H1 (cell line): ENCODE measurements at regions of chr3 and their contacts with region 1.

Region 1: DNA sequence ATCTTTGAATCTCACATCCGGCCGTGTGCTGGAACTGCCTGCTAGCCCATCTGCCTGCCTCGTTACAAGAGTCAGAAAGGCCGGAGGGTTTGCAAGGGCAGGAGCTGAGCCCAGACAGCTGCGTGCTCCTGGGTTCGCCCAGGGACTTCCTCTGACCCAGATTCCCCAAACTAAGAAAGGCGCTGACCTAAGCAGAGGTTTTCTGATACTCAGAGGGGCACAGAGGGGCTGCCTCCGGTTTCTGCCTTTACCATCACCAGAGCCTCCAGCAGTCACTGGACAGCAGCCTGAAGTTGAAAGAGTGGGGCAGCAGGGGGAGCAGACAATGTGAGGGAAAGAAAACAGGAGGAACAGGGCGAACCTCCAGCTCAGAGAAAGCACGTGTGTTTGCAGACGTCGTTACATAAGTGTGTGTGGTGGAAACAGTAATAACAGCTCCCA is 33.4 kb upstream of the RAD18 start:
- DNase-seq: no peak
- H3K4me3 ChIP-seq: no peak overlapping the region
- H3K27ac ChIP-seq: no peak overlapping the region
- H3K4me1 ChIP-seq: peaks cover 0 to 5% (median 4%) of the 10 kb centered on the region in 4 experiments; a peak in 3 of 7 replicates
- H3K27me3 ChIP-seq: no peaks in the 10 kb centered on the region
- CTCF ChIP-seq: peak; percentile 44 to 57 (median 54)
- EP300 ChIP-seq: no peak
- POLR2A ChIP-seq: no peak
- RAD21 ChIP-seq: peak; percentile 35 to 61

Region 2: GRCh38 chr3:8911781-8912180 is 84.9 kb before region 1 on chr3:
- CTCF ChIA-PET with region 1: no interaction called
- POLR2A ChIA-PET with region 1: no interaction called
- DNase-seq: no peak
- H3K4me3 ChIP-seq: no peak overlapping the region
- H3K27ac ChIP-seq: no peak overlapping the region
- H3K4me1 ChIP-seq: no peaks in the 10 kb centered on the region
- H3K27me3 ChIP-seq: no peaks in the 10 kb centered on the region
- CTCF ChIP-seq: no peak
- EP300 ChIP-seq: no peak
- POLR2A ChIP-seq: no peak
- RAD21 ChIP-seq: no peak

Region 3: GRCh38 chr3:8954938-8955763 is 41.5 kb before region 1 on chr3:
- CTCF ChIA-PET with region 1: no interaction called
- POLR2A ChIA-PET with region 1: no interaction called
- DNase-seq: no peak
- H3K4me3 ChIP-seq: no peak overlapping the region
- H3K27ac ChIP-seq: no peak overlapping the region
- H3K4me1 ChIP-seq: no peaks in the 10 kb centered on the region
- H3K27me3 ChIP-seq: no peaks in the 10 kb centered on the region
- CTCF ChIP-seq: 0 out of 4 replicates have a peak, but pooled peaks of 1 of the 3 experiments have one; percentile 3
- EP300 ChIP-seq: no peak
- POLR2A ChIP-seq: no peak
- RAD21 ChIP-seq: no peak

Region 4: GRCh38 chr3:8982509-8982908 is 14.2 kb before region 1 on chr3:
- CTCF ChIA-PET with region 1: interaction called, 75 read pairs
- POLR2A ChIA-PET with region 1: no interaction called
- DNase-seq: no peak
- H3K4me3 ChIP-seq: no peak overlapping the region
- H3K27ac ChIP-seq: no peak overlapping the region
- H3K4me1 ChIP-seq: no peaks in the 10 kb centered on the region; a peak in 1 of 7 replicates
- H3K27me3 ChIP-seq: no peaks in the 10 kb centered on the region
- CTCF ChIP-seq: no peak
- EP300 ChIP-seq: no peak
- POLR2A ChIP-seq: no peak
- RAD21 ChIP-seq: no peak

Region 5: DNA sequence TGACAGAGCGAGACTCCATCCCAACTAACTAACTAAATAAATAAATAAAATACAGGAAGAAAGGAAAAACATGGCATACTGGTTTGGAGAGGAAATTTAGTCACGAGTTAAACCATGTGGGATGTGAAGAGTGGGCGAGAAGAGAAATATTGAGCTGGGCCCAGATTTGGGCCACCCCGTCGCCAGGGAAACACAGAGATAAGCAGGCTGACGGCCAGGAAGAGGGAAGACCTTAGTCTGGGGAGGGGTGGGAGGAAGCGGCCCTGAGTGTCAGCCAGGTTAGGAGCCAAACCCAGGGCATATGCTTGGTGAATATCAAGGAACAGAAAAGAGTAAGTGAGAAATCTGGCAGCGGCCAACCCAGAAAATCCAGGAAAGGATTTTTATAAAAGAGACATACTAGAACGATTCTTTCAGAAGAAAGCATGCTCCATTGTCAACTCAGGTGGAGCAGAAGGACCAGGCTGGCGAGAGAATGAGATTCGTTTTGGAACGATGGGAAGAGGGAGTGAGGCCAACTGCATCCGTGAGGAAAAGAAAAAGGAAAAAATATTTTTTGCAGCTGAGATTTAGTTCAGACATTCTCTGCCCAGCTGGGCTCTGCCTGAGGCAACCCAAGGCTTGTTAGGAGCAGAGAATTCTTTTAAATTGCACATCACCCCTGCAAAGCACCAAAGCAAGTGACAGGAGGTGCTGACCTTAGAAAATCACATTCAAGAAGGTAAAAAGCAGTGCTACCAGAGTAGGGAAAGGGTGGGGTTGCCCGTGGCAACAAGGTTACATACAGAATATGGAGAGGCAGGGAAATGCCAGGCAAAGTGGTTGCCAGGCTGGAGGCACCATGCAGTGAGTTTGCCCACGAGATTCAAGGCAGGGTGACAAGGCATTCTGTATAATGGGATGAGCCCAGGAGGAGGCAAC is 25.9 kb after region 1 on chr3:
- CTCF ChIA-PET with region 1: interaction called, 21 read pairs
- POLR2A ChIA-PET with region 1: interaction called, 3 read pairs
- DNase-seq: peak in 1 of 2 experiments; percentile 37
- H3K4me3 ChIP-seq: no peak overlapping the region
- H3K27ac ChIP-seq: no peak overlapping the region
- H3K4me1 ChIP-seq: peaks cover 0 to 9% (median 5%) of the 10 kb centered on the region in 4 experiments; a peak in 5 of 7 replicates
- H3K27me3 ChIP-seq: no peaks in the 10 kb centered on the region
- CTCF ChIP-seq: no peak
- EP300 ChIP-seq: no peak
- POLR2A ChIP-seq: no peak
- RAD21 ChIP-seq: no peak

Region 6: GRCh38 chr3:9056581-9056980 is 59.9 kb after region 1 on chr3:
- CTCF ChIA-PET with region 1: interaction called, 10 read pairs
- POLR2A ChIA-PET with region 1: no interaction called
- DNase-seq: no peak
- H3K4me3 ChIP-seq: no peak overlapping the region
- H3K27ac ChIP-seq: no peak overlapping the region
- H3K4me1 ChIP-seq: 0 out of 7 replicates have a peak, but pooled peaks cover 0 to 2% (median 0%) of the 10 kb centered on the region in 4 experiments
- H3K27me3 ChIP-seq: no peaks in the 10 kb centered on the region
- CTCF ChIP-seq: no peak
- EP300 ChIP-seq: no peak
- POLR2A ChIP-seq: no peak
- RAD21 ChIP-seq: no peak

Region 7: DNA sequence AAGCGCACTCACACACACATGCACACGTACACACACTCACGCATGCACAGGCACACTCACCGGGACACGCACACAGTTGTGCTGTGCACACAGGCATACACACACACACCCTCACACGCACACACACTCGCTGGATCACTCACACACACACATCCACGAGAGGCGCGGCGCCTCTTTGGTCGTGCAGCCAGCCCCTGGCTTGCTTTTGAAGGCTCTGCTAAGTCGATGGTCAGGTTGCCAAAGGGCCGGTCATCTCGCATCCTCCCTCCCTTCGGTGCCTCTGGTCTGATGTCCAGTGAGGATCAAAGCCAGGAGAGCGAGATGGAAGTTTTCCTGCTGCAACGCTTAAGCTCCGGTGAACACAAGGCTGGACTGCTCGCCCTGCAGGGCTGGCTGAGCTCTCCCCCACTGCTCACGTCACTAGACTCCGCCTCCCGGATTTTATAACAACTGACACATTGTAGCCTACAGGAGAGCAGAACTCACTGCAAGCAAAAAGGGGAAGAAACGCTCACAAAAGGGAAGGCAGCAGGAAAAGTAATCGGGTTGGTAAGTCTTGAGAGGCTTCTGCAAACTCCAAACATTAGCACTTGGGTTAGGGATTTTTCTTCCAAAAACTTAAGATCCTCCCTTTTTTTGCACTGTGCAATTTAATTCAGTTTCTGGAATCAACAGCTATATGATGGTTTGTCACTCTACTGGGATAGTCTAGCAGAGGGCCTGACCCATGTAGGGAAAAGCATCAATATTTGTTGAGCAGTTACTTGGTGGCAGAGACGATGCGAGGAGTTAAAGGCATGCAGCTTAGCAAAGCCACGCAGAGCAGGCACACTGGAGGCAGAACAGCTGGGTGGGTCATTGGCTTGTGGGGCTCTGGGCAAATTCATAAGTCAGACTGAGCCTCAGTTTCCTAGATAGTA is 252.8 kb after region 1 on chr3 and contains the start of gene SRGAP3:
- CTCF ChIA-PET with region 1: interaction called, 10 read pairs
- POLR2A ChIA-PET with region 1: no interaction called
- DNase-seq: peak; percentile 54 to 87
- H3K4me3 ChIP-seq: peak within 1 kb of the TSS; percentile 59 to 74 (median 72)
- H3K27ac ChIP-seq: no peak within 1 kb of the TSS
- H3K4me1 ChIP-seq: peaks cover 7 to 23% (median 16%) of the 10 kb centered on the region in 4 experiments
- H3K27me3 ChIP-seq: no peaks in the 10 kb centered on the region; a peak in 1 of 7 replicates
- CTCF ChIP-seq: peak in 2 of 3 experiments; percentile 34 to 45; a peak in 2 of 4 replicates
- EP300 ChIP-seq: no peak
- POLR2A ChIP-seq: peak in 1 of 2 experiments; percentile 54; a peak in 2 of 3 replicates
- RAD21 ChIP-seq: peak; percentile 36 to 46
- total RNA-seq, gene SRGAP3: 9.4 and 11.4 TPM in 2 replicates